Caco-2 (cell line): ENCODE measurements at regions of chr7 and their contacts with region 1.

Region 1: DNA sequence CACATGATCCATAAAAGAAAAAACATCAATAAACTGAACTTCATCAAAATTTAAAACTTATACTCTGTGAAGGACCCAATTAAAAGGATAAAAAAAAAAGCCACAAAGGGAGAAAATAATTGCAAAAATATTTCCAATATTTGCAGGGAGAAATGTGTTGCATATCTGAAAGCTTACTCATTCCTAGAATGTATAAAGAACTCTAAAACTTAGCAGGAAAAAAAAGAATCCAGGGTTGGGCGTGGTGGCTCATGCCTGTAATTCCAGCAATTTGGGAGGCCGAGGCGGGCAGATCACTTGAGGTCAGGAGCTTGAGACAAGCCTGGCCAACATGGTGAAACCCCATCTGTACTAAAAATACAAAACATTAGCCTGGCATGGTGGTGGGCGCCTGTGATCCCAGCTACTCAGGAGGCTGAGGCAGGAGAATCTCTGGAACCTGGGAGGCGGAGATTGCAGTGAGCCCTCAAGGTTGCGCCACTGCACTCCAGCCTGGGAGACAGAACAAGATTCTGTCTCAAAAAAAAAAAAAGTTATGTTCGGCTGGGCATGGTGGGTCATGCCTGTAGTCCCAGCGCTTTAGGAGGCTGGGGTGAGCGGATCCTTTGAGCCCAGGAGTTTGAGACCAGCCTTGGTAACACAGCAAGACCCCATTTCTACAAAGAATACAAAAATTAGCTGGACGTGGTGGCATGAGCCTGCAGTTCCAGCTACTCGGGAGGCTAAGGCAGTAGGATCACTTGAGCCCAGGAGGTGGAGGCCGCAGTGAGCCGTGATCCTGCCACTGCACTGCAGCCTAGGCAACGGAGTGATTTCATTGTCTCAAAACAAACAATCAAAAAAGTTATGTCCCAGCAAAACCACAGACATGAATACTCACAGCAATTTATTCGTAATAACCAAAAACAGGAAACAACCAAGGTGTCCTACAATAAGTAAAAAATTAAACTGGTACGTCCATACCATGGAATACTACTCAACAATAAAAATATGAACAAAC is 11.3 kb upstream of the CYTH3 start:
- DNase-seq: peak; percentile 45 to 75
- H3K4me3 ChIP-seq: no peak overlapping the region
- H3K4me3 Mint-ChIP-seq: no peak overlapping the region
- H3K27ac Mint-ChIP-seq: peak overlapping the region; percentile 82
- H3K4me1 ChIP-seq: peaks cover 16% of the 10 kb centered on the region
- H3K4me1 Mint-ChIP-seq: peaks cover 12% of the 10 kb centered on the region
- H3K27me3 ChIP-seq: no peaks in the 10 kb centered on the region
- H3K27me3 Mint-ChIP-seq: no peaks in the 10 kb centered on the region
- CTCF ChIP-seq: no peak

Region 2: DNA sequence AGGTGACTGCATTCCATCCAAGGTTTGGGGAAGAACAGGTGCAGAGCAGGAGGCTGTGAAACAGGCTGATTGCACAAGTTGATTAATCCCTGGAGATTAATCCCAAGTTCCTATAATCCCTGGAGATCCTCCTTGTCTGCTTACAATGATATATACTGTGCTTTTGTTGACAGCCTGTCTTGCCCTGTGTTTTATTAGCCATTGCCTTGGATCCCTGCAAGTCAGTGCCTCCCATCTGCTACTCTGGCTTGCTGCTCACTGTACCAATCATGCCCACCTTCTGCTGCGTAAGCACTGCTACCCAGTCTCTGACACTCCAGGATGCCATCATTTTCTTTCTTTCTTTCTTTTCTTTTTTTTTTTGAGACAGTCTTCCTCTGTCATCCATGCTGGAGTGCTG is 187.1 kb before region 1 on chr7:
- CTCF ChIA-PET with region 1: no interaction called
- POLR2A ChIA-PET with region 1: interaction called, 20 read pairs
- intact Hi-C with region 1: no loop called
- DNase-seq: no peak
- H3K4me3 ChIP-seq: no peak overlapping the region
- H3K4me3 Mint-ChIP-seq: no peak overlapping the region
- H3K27ac Mint-ChIP-seq: no peak overlapping the region
- H3K4me1 ChIP-seq: no peaks in the 10 kb centered on the region
- H3K4me1 Mint-ChIP-seq: no peaks in the 10 kb centered on the region
- H3K27me3 ChIP-seq: no peaks in the 10 kb centered on the region
- H3K27me3 Mint-ChIP-seq: no peaks in the 10 kb centered on the region
- CTCF ChIP-seq: no peak